Activated T-helper 1 cell treated with anti-CD3 and anti-CD28 coated beads, Interleukin-12 subunit alpha, Interleukin-12 subunit beta, Interleukin-2, Interleukin-4 antibody, amounts not matched to agents 30 ng/mL and 10 ng/mL and 1 ng/mL, durations not matched to agents 14 hours and 24 hours and 36 hours (primary cell): ENCODE measurements at regions of chr18 and their contacts with region 1.

Region 1: GRCh38 chr18:76803814-76804213 is 18.5 kb upstream of the ZNF236 start:
- DNase-seq: peak; percentile 52
- H3K4me3 Mint-ChIP-seq: no peak overlapping the region
- H3K27ac Mint-ChIP-seq: no peak overlapping the region
- H3K4me1 Mint-ChIP-seq: peaks cover 8% of the 10 kb centered on the region
- H3K27me3 Mint-ChIP-seq: peaks cover 8% of the 10 kb centered on the region

Region 2: DNA sequence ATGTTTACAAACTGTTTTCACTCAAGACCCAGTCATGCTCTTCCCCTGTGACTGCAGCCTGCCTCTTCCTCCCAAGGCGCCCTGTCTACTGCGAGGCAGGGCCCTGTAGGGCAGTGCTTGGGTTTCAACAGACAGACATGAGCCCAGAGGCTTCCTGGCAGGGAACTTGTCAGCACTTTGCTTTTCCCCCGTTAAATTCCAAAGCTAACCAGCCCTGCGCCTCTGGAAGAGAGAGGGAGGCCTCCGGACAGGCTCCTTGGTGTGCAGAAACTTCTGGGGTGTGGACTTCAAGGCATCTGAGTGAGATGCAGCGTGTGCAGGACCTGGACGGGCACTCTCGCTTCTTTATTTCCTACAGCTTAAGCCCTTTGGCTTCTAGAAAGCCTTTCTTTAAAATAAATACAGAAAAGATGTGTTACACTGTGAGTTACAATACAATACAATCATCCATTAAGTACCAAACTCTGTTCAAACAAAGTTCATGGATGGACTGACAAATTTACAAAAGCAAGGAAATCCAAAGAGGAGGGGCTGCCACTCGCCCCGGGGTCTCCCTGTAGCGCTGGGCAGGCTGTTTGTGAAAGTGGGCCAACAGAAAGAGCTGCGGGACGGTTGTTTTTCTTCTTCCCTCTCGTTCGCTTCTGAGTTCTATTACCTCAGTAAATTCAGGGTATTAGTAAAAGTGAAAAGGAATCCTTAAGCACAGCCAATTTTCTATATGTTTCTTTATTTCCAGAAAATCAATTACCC is 300.0 kb before region 1 on chr18:
- intact Hi-C with region 1: no loop called
- DNase-seq: no peak
- H3K4me3 Mint-ChIP-seq: no peak overlapping the region
- H3K27ac Mint-ChIP-seq: no peak overlapping the region
- H3K4me1 Mint-ChIP-seq: no peaks in the 10 kb centered on the region
- H3K27me3 Mint-ChIP-seq: peaks cover 21% of the 10 kb centered on the region

Region 3: GRCh38 chr18:76822510-76823160 is 18.8 kb after region 1 on chr18 and contains the start of gene ZNF236:
- intact Hi-C with region 1: loop called (anchors 1 kb)
- DNase-seq: peak; percentile 59
- H3K4me3 Mint-ChIP-seq: peak within 1 kb of the TSS; percentile 93
- H3K27ac Mint-ChIP-seq: peak within 1 kb of the TSS; percentile 96
- H3K4me1 Mint-ChIP-seq: peaks cover 41% of the 10 kb centered on the region
- H3K27me3 Mint-ChIP-seq: no peaks in the 10 kb centered on the region
- total RNA-seq, gene ZNF236: 18.0 and 21.5 TPM in 2 replicates

Region 4: DNA sequence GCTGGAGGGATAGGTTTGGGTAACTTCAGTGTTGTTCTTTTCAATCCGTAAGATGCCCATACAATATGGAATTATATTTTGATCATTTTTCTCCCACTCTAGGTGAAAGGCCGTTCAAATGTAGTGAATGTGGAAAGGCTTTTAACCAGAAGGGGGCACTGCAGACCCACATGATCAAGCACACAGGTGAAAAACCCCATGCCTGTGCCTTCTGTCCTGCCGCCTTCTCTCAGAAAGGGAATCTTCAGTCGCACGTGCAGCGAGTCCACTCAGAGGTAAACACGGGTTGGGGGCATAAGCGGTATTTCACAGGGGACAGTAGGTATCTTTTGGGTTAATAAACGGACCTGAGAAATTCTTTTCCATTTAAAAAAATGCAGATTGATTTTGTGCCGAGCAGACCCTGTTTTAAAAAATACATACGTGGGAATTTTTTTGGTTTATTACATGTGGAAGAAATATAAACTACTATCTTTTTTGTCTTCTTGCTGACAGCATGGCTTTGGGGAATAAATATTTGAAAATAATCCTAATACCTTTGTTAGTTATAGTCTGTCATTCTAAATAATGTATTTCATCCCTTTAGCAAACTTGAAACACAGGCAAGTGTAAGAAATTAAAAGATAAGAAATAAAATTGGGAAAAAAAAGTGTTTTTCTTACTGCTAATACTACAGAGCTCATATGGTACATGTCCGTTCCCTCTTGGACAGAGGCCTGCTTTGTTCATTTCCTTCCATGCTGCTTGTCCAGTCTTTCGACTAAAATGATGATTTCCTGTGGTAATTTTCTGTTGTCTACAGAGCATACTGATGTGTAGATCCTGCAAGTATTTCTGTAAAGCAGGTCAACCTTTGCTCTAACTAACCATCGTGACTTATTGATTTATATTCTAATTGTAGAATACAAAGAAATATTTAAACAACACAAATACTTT is 71.8 kb after region 1 on chr18:
- intact Hi-C with region 1: loop called (anchors 1 kb)
- DNase-seq: peak; percentile 14
- H3K4me3 Mint-ChIP-seq: no peak overlapping the region
- H3K27ac Mint-ChIP-seq: peak overlapping the region; percentile 59
- H3K4me1 Mint-ChIP-seq: peaks cover 17% of the 10 kb centered on the region
- H3K27me3 Mint-ChIP-seq: no peaks in the 10 kb centered on the region

Region 5: GRCh38 chr18:76914314-76914713 is 110.5 kb after region 1 on chr18:
- intact Hi-C with region 1: no loop called
- DNase-seq: no peak
- H3K4me3 Mint-ChIP-seq: no peak overlapping the region
- H3K27ac Mint-ChIP-seq: no peak overlapping the region
- H3K4me1 Mint-ChIP-seq: peaks cover 4% of the 10 kb centered on the region
- H3K27me3 Mint-ChIP-seq: no peaks in the 10 kb centered on the region

Region 6: GRCh38 chr18:77061946-77062517 is 258.2 kb after region 1 on chr18:
- intact Hi-C with region 1: loop called (anchors 5 kb)
- DNase-seq: peak; percentile 37
- H3K4me3 Mint-ChIP-seq: peak overlapping the region; percentile 76
- H3K27ac Mint-ChIP-seq: peak overlapping the region; percentile 97
- H3K4me1 Mint-ChIP-seq: peaks cover 85% of the 10 kb centered on the region
- H3K27me3 Mint-ChIP-seq: no peaks in the 10 kb centered on the region